Activated naive CD4-positive, alpha-beta T cell treated with anti-CD3 and anti-CD28 coated beads for 36 hours (primary cell): ENCODE measurements at regions of chr6 and their contacts with region 1.

Region 1: GRCh38 chr6:47097092-47097945 is 55.2 kb upstream of the ADGRF1 start:
- DNase-seq: peak; percentile 72
- H3K4me3 Mint-ChIP-seq: no peak overlapping the region
- H3K27ac Mint-ChIP-seq: no peak overlapping the region
- H3K4me1 Mint-ChIP-seq: no peaks in the 10 kb centered on the region
- H3K27me3 Mint-ChIP-seq: peaks cover 4% of the 10 kb centered on the region

Region 2: GRCh38 chr6:47203266-47203937 is 106.1 kb after region 1 on chr6:
- CTCF ChIA-PET with region 1: no interaction called
- intact Hi-C with region 1: loop called (anchors 1 kb)
- DNase-seq: peak; percentile 42
- H3K4me3 Mint-ChIP-seq: no peak overlapping the region
- H3K27ac Mint-ChIP-seq: peak overlapping the region; percentile 66
- H3K4me1 Mint-ChIP-seq: peaks cover 19% of the 10 kb centered on the region
- H3K27me3 Mint-ChIP-seq: peaks cover 4% of the 10 kb centered on the region

Region 3: DNA sequence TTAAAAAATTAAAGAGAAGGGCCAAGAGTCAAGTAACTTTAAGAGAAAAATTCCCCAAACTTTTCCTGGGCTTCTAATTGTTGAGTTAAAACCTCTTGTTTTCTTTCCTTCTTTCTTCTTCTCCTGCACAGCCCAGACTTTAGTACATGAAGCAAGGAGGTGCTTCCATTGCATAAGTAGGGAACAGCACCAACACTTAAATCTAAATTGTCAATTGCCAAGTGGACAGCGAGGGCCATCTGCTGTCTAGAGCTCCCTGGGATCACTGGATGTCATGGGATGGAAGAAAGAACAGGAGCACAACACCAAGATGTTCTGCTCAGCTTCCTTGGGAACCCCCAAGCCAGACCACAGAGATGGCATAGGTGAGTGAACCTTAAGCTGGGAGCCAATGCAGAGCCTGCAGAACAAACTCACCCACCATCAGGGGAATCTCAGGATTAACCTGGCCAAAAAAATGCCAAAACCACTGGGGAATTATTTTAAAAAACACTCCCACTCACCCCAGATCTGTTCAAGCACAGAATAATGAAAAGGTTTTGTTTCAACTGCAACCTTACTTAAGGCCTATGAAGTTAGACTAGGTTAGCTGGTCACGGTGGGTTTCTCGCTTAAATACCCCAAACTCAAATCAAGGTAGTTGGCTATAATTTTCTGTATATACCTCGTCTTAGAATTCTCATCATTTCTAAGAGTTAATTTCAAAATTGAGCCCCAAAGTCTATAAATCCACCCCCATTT is 144.6 kb after region 1 on chr6:
- CTCF ChIA-PET with region 1: no interaction called
- intact Hi-C with region 1: no loop called
- DNase-seq: no peak
- H3K4me3 Mint-ChIP-seq: no peak overlapping the region
- H3K27ac Mint-ChIP-seq: no peak overlapping the region
- H3K4me1 Mint-ChIP-seq: peaks cover 33% of the 10 kb centered on the region
- H3K27me3 Mint-ChIP-seq: no peaks in the 10 kb centered on the region

Region 4: GRCh38 chr6:47252633-47253032 is 155.3 kb after region 1 on chr6:
- CTCF ChIA-PET with region 1: no interaction called
- intact Hi-C with region 1: loop called (anchors 1 kb)
- DNase-seq: peak; percentile 16
- H3K4me3 Mint-ChIP-seq: no peak overlapping the region
- H3K27ac Mint-ChIP-seq: no peak overlapping the region
- H3K4me1 Mint-ChIP-seq: peaks cover 12% of the 10 kb centered on the region
- H3K27me3 Mint-ChIP-seq: no peaks in the 10 kb centered on the region

Region 5: DNA sequence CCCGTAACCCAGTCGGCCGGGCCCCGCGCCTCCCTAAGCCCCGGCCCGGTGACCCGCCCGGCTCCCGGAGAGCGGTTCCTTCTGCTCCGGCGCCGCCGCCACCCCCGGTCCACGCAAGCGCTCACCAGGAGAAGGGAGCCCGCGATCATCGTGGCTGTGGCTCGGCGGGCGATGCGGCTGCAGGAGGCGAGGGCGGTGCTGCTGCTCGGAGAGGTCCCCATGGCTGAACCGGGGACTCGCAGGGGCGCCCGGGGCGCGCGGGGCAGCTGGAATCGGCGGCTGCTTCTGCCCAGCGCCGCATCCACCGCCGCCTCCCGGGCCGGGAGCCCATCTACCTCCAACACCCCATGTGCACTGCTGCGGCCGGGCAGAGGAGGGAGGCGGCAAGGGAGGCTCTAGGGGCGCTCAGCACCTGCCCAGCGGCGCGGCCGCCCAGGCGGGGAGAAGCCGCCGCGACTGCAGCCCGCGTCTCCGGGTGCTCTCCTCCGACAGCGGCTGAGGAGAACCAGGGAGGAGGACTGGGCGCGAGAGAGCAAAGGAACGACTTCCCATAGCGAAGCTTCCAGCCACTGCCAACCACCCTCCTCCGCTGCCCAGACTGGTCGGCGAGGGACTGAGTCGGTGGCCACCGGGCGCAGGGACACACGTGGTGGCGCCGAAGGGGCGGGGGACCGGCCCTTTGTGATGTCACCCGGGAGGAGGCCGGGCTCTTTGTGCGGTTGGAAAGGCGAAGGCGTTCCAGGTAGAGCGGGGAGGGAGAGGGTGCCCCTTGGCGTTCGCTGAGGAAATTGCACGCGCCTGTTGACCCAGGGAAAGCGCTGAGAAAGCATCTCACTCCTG is 212.2 kb after region 1 on chr6 and contains the start of gene TNFRSF21:
- CTCF ChIA-PET with region 1: interaction called, 31 read pairs
- intact Hi-C with region 1: loop called (anchors 1 kb)
- DNase-seq: peak; percentile 91
- H3K4me3 Mint-ChIP-seq: peak within 1 kb of the TSS; percentile 74
- H3K27ac Mint-ChIP-seq: no peak within 1 kb of the TSS
- H3K4me1 Mint-ChIP-seq: peaks cover 7% of the 10 kb centered on the region
- H3K27me3 Mint-ChIP-seq: peaks cover 42% of the 10 kb centered on the region
- total RNA-seq, gene TNFRSF21: 3.6 to 4.3 TPM

Region 6: GRCh38 chr6:47977314-47977713 is 880.0 kb after region 1 on chr6:
- CTCF ChIA-PET with region 1: no interaction called
- intact Hi-C with region 1: no loop called
- DNase-seq: no peak
- H3K4me3 Mint-ChIP-seq: no peak overlapping the region
- H3K27ac Mint-ChIP-seq: no peak overlapping the region
- H3K4me1 Mint-ChIP-seq: no peaks in the 10 kb centered on the region
- H3K27me3 Mint-ChIP-seq: no peaks in the 10 kb centered on the region